Activated T-helper 2 cell treated with anti-CD3 and anti-CD28 coated beads, Interferon-gamma antibody, Interleukin-2, Interleukin-4, amounts not matched to agents 10 μg/mL and 5 μg/mL and 100 μg/mL, durations not matched to agents 14 hours and 24 hours and 36 hours (primary cell): ENCODE measurements at regions of chr11 and their contacts with region 1.

Region 1: GRCh38 chr11:6653097-6653496 is 2.5 kb downstream of the DCHS1 start:
- DNase-seq: no peak
- H3K4me3 Mint-ChIP-seq: no peak overlapping the region
- H3K27ac Mint-ChIP-seq: no peak overlapping the region
- H3K4me1 Mint-ChIP-seq: peaks cover 3% of the 10 kb centered on the region
- H3K27me3 Mint-ChIP-seq: peaks cover 16% of the 10 kb centered on the region

Region 2: DNA sequence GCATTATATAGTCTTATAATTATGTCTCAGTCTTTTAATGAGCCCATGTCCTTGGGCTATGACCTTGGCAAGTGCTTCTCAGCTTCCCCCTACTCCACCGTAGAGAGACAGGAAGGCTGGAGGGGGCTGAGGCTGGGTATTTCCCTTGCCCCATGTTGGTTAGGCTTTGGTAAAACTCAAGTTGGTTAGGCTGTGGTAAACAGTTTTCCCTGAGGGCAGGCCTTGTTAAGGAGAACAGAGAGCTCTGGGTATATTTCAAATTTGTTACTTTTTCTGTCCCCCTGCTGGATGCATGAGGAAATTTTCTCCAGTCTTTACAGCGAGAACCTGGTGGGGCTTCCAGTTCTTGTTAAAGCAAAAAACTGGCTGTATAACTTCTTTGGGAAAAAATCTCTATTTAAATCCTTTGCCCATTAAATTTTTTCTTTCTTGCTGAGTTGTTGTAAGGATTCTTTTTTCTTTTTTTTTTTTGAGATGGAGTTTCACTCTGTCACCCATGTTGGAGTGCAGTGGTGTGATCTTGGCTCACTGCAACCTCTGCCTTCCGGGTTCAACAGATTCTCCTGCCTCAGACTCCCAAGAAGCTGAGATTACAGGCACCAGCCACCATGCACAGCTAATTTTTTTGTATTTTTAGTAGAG is 14.8 kb after region 1 on chr11:
- intact Hi-C with region 1: loop called (anchors 2 kb)
- DNase-seq: peak; percentile 29
- H3K4me3 Mint-ChIP-seq: no peak overlapping the region
- H3K27ac Mint-ChIP-seq: no peak overlapping the region
- H3K4me1 Mint-ChIP-seq: peaks cover 50% of the 10 kb centered on the region
- H3K27me3 Mint-ChIP-seq: peaks cover 3% of the 10 kb centered on the region